Calu3 (cell line): ENCODE measurements at regions of chr6 and their contacts with region 1.

Region 1: DNA sequence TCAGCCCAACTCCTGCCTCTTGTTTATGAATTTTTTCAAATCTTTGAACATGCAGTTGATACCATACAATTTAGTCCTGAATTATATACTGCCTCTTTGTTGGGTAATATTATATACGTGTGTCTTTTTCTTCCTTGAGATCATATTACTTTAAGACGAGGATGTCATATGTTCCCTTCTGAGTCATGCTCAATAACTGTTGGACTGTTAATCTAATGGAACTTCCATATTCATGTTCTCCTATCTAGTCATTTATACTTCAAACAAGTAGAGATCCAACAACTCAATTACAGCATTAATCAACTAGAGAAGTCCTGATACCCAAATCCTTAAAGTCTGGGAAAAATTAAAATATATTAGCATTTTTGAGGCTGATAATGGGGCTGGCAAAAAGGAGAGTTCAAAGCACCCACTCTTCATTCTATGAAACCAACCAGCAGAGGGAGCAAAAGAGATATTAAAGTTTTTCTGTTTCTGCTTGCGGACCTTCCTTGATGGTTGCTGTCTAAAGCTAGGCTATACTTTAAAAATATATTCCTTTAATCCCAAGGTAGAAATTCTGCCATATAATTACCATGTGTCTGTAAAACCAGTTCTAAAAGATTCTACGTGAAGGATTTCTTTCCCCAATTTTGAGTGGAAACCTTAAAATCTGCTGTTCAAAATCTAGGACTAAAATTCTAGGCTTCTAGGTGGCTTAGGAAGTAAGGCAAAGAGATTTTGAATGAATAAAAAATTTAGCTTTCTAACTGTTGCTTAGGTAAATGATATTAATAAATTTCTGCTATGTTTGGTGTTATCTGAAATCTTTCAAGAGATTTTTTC is 498.9 kb downstream of the BCKDHB start:
- DNase-seq: peak; percentile 46
- H3K4me3 Mint-ChIP-seq: no peak overlapping the region
- H3K27ac Mint-ChIP-seq: peak overlapping the region; percentile 27
- H3K4me1 Mint-ChIP-seq: peaks cover 29% of the 10 kb centered on the region
- H3K27me3 Mint-ChIP-seq: no peaks in the 10 kb centered on the region
- CTCF ChIP-seq: peak; percentile 62

Region 2: GRCh38 chr6:80594461-80594860 is 10.9 kb before region 1 on chr6:
- CTCF ChIA-PET with region 1: no interaction called
- intact Hi-C with region 1: no loop called
- DNase-seq: no peak
- H3K4me3 Mint-ChIP-seq: no peak overlapping the region
- H3K27ac Mint-ChIP-seq: no peak overlapping the region
- H3K4me1 Mint-ChIP-seq: no peaks in the 10 kb centered on the region
- H3K27me3 Mint-ChIP-seq: no peaks in the 10 kb centered on the region
- CTCF ChIP-seq: no peak

Region 3: GRCh38 chr6:80725156-80725930 is 120.0 kb after region 1 on chr6:
- CTCF ChIA-PET with region 1: no interaction called
- intact Hi-C with region 1: loop called (anchors 5 kb)
- DNase-seq: no peak
- H3K4me3 Mint-ChIP-seq: no peak overlapping the region
- H3K27ac Mint-ChIP-seq: no peak overlapping the region
- H3K4me1 Mint-ChIP-seq: no peaks in the 10 kb centered on the region
- H3K27me3 Mint-ChIP-seq: no peaks in the 10 kb centered on the region
- CTCF ChIP-seq: no peak

Region 4: GRCh38 chr6:80959034-80959433 is 353.7 kb after region 1 on chr6:
- CTCF ChIA-PET with region 1: no interaction called
- intact Hi-C with region 1: loop called (anchors 10 kb)
- DNase-seq: no peak
- H3K4me3 Mint-ChIP-seq: no peak overlapping the region
- H3K27ac Mint-ChIP-seq: no peak overlapping the region
- H3K4me1 Mint-ChIP-seq: no peaks in the 10 kb centered on the region
- H3K27me3 Mint-ChIP-seq: no peaks in the 10 kb centered on the region
- CTCF ChIP-seq: no peak

Region 5: GRCh38 chr6:81172056-81172740 is 566.8 kb after region 1 on chr6:
- CTCF ChIA-PET with region 1: interaction called, 3 read pairs
- intact Hi-C with region 1: loop called (anchors 5 kb)
- DNase-seq: peak; percentile 66
- H3K4me3 Mint-ChIP-seq: no peak overlapping the region
- H3K27ac Mint-ChIP-seq: peak overlapping the region; percentile 66
- H3K4me1 Mint-ChIP-seq: peaks cover 20% of the 10 kb centered on the region
- H3K27me3 Mint-ChIP-seq: no peaks in the 10 kb centered on the region
- CTCF ChIP-seq: no peak

Region 6: GRCh38 chr6:82006027-82006738 is 1400.8 kb after region 1 on chr6:
- CTCF ChIA-PET with region 1: no interaction called
- intact Hi-C with region 1: loop called (anchors 10 kb)
- DNase-seq: peak; percentile 29
- H3K4me3 Mint-ChIP-seq: no peak overlapping the region
- H3K27ac Mint-ChIP-seq: no peak overlapping the region
- H3K4me1 Mint-ChIP-seq: no peaks in the 10 kb centered on the region
- H3K27me3 Mint-ChIP-seq: no peaks in the 10 kb centered on the region
- CTCF ChIP-seq: peak; percentile 54